ENCODE measurements at regions of chr7 and their contacts with region 1.

Region 1: DNA sequence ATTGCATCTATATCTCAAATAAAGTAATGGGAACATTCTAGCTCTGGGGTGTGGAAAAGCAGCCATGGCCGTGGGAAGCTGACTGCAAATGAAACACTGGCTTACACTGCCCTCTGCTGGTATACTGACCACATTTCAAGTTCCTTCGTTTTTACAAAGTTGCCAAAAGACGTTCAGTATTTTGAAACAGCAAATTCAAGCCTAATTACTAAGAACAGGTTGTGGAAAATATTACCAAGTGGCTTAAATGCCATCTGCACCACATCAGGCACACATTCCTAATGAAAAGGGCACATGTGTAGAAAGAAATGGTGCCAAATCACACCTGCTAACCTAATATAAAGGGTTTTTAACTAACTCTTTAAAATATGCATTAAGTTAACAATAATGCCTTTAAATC is 83.9 kb downstream of the JAZF1 start:
- DNase-seq: peak; percentile 60
- ATAC-seq: peak; percentile 63
- H3K4me3 Mint-ChIP-seq: no peak overlapping the region
- H3K27ac Mint-ChIP-seq: no peak overlapping the region
- H3K4me1 Mint-ChIP-seq: peaks cover 10% of the 10 kb centered on the region
- H3K27me3 Mint-ChIP-seq: no peaks in the 10 kb centered on the region

Region 2: DNA sequence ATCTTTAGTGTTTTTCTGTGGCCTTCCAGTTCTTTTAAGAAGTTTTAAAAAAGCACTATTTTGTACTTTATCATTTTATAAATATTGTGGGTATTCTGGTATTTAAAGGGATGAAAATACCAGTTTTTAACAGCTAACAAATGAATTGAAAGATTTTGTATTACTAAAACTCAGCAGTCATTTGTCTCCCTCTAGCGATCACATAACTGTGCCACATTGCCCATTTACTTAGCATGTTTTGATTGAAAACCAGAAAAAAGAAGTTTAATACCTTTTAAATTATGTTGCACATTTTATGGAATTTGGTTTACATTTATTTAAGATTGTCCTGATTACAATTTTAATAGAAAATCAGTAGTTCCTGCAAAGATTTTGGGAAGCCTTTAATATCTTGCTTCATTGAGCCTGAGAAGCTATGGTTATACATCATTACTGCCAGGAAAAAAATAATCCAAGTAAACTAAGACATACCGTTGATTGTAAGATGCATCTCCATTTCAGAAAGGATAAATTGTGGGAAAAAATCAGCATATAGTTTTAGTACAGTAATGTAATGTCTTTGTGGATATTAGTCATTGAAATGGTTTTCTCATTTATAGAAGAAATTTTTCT is 321.9 kb before region 1 on chr7:
- CTCF ChIA-PET with region 1: no interaction called
- POLR2A ChIA-PET with region 1: no interaction called
- intact Hi-C with region 1: no loop called
- DNase-seq: no peak
- ATAC-seq: no peak
- H3K4me3 Mint-ChIP-seq: no peak overlapping the region
- H3K27ac Mint-ChIP-seq: no peak overlapping the region
- H3K4me1 Mint-ChIP-seq: peaks cover 10% of the 10 kb centered on the region
- H3K27me3 Mint-ChIP-seq: no peaks in the 10 kb centered on the region

Region 3: GRCh38 chr7:28062197-28062991 is 34.3 kb before region 1 on chr7:
- CTCF ChIA-PET with region 1: interaction called, 11 read pairs
- POLR2A ChIA-PET with region 1: no interaction called
- intact Hi-C with region 1: loop called in 1 of 2 experiments (anchors 1 kb)
- DNase-seq: peak; percentile 79
- ATAC-seq: peak; percentile 79
- H3K4me3 Mint-ChIP-seq: no peak overlapping the region
- H3K27ac Mint-ChIP-seq: no peak overlapping the region
- H3K4me1 Mint-ChIP-seq: peaks cover 5% of the 10 kb centered on the region
- H3K27me3 Mint-ChIP-seq: no peaks in the 10 kb centered on the region

Region 4: DNA sequence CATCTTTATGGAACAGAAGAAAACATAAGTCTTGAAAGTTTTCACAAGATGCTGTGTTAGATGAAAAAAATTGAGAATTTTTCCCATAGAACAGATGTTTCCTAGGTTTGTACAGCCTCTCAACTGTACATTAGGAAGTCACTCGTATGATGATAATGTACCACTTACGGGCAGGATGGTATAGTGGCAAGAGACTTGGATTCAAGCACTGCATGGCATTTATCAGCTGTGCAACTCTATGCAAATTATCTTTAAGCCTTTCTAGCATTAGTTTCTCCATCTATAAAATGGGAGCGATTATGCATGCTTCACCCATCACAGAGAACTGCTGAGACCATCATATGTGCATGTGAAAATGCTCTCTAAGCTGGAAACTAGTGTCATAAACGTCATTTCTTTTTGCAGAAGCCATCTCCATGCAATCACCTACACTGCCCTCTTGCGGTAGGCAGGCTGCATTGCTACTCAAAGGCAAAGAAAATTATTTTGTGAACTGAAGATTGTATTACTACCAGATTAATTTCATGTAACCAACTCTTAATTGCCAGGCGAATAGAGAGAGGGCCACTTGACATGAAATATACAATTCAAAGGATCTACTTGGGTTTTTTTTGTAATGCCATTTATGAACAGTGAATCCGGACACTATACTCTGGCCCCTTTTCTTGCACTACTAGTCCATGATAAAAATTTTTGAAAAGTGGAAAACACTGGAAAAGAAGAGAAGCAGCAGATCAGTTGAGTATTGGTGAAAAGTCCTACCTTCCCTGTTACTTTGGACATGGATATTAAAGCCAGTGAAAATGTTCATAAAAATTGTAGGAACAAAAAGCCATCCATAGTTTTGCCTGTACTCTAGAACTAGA is 18.4 kb before region 1 on chr7:
- CTCF ChIA-PET with region 1: interaction called, 47 read pairs
- POLR2A ChIA-PET with region 1: no interaction called
- intact Hi-C with region 1: loop called in 1 of 2 experiments (anchors 1 kb)
- DNase-seq: peak; percentile 66
- ATAC-seq: peak; percentile 70
- H3K4me3 Mint-ChIP-seq: no peak overlapping the region
- H3K27ac Mint-ChIP-seq: no peak overlapping the region
- H3K4me1 Mint-ChIP-seq: peaks cover 5% of the 10 kb centered on the region
- H3K27me3 Mint-ChIP-seq: no peaks in the 10 kb centered on the region